ENCODE measurements at regions of chr12 and their contacts with region 1.

Region 1: GRCh38 chr12:98653866-98654493 is 8.9 kb downstream of the APAF1 start:
- DNase-seq: no peak
- ATAC-seq: no peak

Region 2: DNA sequence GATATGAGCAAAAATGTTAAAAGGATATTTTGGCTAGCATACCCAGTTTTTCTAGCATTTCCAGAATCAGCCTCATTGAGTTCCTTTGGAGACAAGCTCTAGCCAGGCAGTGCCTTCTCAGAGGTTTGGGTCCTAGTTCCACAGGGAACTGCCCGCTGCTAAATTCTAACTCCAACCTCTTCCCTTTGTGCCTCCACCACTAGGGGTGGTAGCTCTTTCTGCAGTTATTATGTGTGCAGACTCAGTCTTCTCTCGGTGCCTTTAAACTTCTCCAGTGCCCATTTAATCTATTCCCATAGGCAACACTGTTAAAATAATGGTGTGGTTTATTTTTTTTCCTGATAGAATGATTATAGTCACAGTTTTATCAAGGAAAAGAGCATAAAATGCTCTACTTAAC is 82.0 kb before region 1 on chr12:
- intact Hi-C with region 1: loop called in 1 of 2 experiments (anchors 2 kb)
- DNase-seq: no peak
- ATAC-seq: no peak

Region 3: GRCh38 chr12:99137124-99137855 is 483.3 kb after region 1 on chr12:
- intact Hi-C with region 1: no loop called
- DNase-seq: no peak
- ATAC-seq: no peak

Measured in left cardiac atrium (tissue), 4 donors.